Testis (tissue), 5 donors: ENCODE measurements at regions of chr3 and their contacts with region 1.

Region 1: GRCh38 chr3:123652346-123652984 is 67.6 kb upstream of the HACD2 start:
- DNase-seq: peak; percentile 88
- H3K4me3 ChIP-seq: no peak overlapping the region
- H3K27ac ChIP-seq: peak overlapping the region; percentile 76 to 79
- H3K4me1 ChIP-seq: peaks cover 22% of the 10 kb centered on the region
- H3K27me3 ChIP-seq: no peaks in the 10 kb centered on the region
- CTCF ChIP-seq: peak; percentile 65 to 73 (median 72)
- POLR2A ChIP-seq: no peak

Region 2: DNA sequence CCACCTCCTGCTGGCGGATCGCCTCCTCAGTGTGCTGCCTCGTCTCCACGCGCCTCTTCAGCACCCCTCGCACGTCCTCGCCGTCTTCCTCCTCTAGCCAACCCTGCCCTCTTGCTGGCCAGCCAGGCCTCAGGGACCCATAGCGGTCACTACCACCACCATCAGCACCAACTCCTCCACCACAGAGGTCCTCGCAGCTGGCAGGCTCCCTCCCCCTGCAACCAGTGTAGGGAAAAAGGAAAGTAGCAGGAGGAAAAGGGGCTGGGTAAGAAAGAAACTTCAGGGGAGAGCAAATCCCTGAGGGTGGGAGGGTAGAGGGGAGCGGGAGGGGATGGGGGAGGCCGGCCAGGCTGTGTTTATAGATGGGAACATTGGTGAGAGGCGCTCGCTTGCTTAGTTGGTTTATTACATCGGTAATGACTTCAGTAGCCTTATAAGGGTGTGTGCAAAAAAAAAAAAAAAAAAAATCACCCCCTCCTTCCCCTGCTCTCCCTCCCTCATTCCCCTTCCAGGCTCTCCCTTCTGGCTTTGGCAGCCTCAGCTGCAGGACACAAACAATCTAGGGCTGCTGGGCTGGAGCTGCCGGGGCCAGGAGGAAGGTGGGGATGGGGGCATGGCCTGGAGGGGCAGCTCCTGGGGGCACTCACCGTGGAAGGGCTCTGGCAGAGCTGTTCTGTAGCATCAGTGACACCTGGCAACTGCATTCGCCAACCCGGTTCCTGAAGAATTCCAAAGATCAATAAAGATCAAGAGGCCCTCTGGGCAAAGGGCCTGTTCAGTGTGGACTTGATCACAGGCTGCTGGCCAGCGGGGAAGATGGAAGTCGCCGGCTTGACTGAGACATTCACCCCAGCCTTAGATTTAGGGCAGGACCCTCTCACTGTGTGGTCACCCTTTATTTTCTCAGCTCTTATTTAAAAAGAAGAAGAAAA is 48.6 kb after region 1 on chr3:
- intact Hi-C with region 1: loop called (anchors 5 kb)
- DNase-seq: peak; percentile 81
- H3K4me3 ChIP-seq: peak overlapping the region; percentile 59 to 69
- H3K27ac ChIP-seq: peak overlapping the region; percentile 91 to 92
- H3K4me1 ChIP-seq: peaks cover 30% of the 10 kb centered on the region
- H3K27me3 ChIP-seq: no peaks in the 10 kb centered on the region
- CTCF ChIP-seq: no peak
- POLR2A ChIP-seq: no peak

Region 3: DNA sequence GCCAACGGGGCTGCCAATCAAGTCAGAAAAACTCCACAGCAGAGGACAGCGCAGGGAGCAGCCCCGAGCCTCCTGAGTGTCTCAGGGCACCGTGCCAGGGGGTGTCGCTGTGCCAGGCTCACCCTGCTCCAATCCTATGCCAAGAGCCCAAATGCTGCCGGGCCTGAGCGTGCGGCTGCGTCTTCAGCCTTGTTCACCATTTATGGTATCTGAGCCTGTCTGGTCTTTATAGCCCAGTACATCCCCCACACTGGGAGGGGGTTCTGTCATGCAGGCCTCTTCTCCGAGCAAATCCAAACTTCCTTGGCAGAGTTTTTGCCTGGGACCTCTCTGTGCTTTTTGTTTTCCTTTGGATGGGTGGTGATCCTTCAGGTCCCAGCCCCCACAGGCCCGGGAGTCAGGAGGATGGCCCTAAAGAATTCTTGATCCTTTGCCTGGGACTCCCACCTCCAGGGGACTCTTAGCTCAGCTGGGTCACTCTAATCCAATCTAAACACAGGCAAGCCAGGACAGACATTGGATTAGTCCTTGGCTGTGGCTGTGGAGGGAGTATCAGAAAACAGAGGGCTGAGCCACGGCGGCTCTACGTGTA is 67.5 kb after region 1 on chr3:
- intact Hi-C with region 1: loop called (anchors 5 kb)
- DNase-seq: peak; percentile 68
- H3K4me3 ChIP-seq: no peak overlapping the region
- H3K27ac ChIP-seq: peak overlapping the region; percentile 74 to 83
- H3K4me1 ChIP-seq: peaks cover 19% of the 10 kb centered on the region
- H3K27me3 ChIP-seq: no peaks in the 10 kb centered on the region
- CTCF ChIP-seq: no peak
- POLR2A ChIP-seq: no peak

Region 4: DNA sequence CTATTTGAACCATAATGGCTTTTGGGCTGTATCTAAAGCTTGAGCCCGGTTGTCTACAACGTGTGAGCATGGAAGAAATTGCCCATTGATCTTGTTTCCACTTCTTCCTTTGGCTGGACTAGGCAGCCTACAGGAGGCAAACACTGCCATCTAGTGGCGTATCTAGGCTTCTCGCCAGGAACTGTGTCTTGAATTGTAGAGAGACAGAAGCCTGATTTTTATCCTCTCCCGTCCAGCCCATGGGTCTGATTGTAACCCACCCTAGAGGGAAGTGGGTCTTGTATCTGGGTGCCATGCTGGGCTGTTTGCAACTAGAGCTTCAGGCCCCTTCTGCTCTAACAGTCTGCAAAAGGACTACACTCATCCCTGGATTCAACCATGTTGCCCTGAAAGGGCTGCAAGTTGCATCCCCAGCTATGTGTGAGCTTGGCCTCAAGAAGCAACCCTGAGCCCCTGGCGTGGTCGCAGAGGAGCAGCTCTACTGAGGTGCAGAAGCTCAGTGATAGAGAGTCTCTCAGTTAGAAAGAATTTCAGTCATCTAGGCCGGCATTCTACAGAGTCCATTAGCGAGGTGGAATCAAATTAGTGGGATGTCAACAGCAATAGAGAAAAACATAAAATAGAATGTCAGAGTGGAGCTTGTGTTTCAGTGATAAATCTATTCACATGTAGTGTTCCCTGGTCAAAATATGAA is 907.6 kb after region 1 on chr3:
- intact Hi-C with region 1: loop called (anchors 10 kb)
- DNase-seq: peak; percentile 87
- H3K4me3 ChIP-seq: no peak overlapping the region
- H3K27ac ChIP-seq: peak overlapping the region in 1 of 2 donors; percentile 55
- H3K4me1 ChIP-seq: peaks cover 42% of the 10 kb centered on the region
- H3K27me3 ChIP-seq: no peaks in the 10 kb centered on the region
- CTCF ChIP-seq: peak; percentile 68 to 83 (median 80)
- POLR2A ChIP-seq: no peak